Endothelial cell of umbilical vein (primary cell): ENCODE measurements at regions of chr3 and their contacts with region 1.

Region 1: DNA sequence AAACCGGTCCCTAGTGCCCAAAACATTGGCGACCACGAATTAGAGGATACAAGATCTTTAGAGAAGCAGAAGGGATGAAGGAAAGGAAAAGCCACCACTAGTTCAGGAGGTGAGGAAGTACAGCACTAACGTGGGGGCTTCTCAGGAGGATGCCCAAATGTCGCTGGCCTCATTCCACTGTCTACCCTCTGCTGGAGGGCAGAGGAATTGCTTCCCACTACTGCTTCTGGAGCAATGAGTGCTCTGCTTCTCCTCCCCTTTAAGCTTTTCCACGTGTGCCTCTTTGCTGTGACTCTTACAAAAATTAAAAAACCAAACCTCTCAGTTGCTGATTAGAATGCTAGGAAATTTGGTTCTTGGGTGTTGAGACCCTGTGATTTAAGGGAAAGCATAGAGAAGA is 281.3 kb downstream of the CLSTN2 start:
- DNase-seq: no peak
- H3K4me3 ChIP-seq: no peak overlapping the region
- H3K27ac ChIP-seq: no peak overlapping the region
- H3K4me1 ChIP-seq: no peaks in the 10 kb centered on the region
- H3K27me3 ChIP-seq: no peaks in the 10 kb centered on the region
- CTCF ChIP-seq: peak; percentile 17 to 27
- POLR2A ChIP-seq: no peak

Region 2: DNA sequence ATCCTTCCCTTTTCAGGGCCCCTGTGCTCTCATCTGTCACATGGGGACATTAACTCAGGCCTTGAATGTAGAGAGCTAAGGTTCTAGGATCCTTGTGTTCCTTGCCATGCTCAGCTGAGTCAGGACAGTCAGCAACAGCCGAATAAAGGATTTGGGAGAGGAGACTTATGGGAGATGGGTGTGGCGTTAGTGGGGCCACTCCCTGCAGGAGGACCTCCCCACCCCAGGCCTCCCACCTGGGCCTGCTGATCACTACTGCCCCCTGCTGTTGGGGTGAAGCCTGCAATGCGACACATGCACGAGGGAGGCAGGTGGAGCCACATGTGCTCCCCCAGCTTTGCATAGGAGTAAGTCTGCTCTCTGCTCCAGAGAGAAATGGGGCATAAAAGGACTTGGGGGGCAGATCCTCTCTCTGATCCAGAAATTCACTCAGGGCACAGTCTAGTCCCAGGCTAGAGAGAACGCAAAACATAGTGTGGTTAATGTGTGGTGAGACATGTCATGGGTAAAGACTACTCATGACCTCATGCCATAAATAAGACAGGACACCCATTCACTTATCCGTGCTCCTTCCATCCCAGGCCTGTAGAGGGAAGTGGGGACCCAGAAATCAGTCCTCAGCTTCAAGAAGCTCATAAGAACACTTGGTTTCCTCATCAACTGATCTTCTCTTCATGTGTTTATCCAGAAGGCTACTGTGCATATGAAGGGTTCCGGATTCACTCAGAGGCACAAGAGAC is 696.1 kb before region 1 on chr3:
- CTCF ChIA-PET with region 1: no interaction called
- POLR2A ChIA-PET with region 1: no interaction called
- dilution Hi-C with region 1: no loop called
- intact Hi-C with region 1: loop called (anchors 10 kb)
- DNase-seq: no peak
- H3K4me3 ChIP-seq: no peak overlapping the region
- H3K27ac ChIP-seq: no peak overlapping the region
- H3K4me1 ChIP-seq: no peaks in the 10 kb centered on the region
- H3K27me3 ChIP-seq: no peaks in the 10 kb centered on the region
- CTCF ChIP-seq: peak in 1 of 2 donors; percentile 24
- POLR2A ChIP-seq: no peak

Region 3: DNA sequence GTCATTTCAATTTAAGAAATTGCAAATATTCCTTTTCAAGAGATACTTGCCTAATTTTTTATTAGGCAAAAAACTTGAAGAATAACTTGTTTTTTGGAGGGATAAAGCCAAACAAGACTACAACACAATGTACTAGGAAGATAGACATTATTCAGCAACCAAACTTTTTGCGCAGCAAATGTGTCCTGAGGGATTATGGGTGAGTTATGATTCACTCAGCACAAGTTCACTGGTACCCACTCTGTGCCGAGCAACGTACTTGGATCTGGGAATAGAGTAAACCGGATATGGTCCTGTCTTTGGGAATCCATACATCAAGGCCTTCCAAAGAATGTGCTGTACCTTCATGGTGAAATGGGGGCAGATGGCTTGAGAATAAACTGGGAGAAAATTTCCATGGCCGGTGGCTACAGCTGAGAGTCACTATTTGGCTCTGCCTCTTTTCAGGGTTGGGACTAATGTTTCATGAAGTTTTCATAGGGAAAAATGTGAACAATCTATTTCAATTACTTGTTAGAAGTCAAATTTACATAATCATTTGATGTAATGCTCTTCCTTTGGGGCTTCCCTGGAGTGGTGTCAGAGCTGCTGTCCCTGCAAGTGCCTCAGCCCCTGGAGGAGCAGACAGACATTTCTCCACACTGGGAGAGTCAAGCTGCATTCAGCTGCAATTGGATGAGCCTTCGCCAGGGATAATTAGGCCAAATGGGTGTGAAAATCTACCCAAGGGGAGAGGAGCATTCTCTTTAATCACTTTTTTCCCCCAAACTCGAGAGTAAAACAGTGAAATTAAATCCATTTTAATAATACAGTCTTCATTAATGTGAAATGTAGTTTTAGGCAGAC is 34.0 kb after region 1 on chr3:
- CTCF ChIA-PET with region 1: no interaction called
- POLR2A ChIA-PET with region 1: no interaction called
- dilution Hi-C with region 1: no loop called
- intact Hi-C with region 1: loop called (anchors 1 kb)
- DNase-seq: no peak
- H3K4me3 ChIP-seq: no peak overlapping the region
- H3K27ac ChIP-seq: no peak overlapping the region
- H3K4me1 ChIP-seq: no peaks in the 10 kb centered on the region
- H3K27me3 ChIP-seq: peaks cover 0 to 8% of the 10 kb centered on the region in 2 experiments
- CTCF ChIP-seq: no peak
- POLR2A ChIP-seq: no peak